Right cardiac atrium (tissue), 5 donors: ENCODE measurements at regions of chr11 and their contacts with region 1.

Region 1: GRCh38 chr11:34492806-34493414 is 20.7 kb downstream of the ELF5 start:
- DNase-seq: peak in 2 of 3 donors; percentile 57 to 86
- ATAC-seq: no peak
- H3K4me3 ChIP-seq: no peak overlapping the region
- H3K27ac ChIP-seq: no peak overlapping the region
- H3K4me1 ChIP-seq: no peaks in the 10 kb centered on the region
- H3K27me3 ChIP-seq: no peaks in the 10 kb centered on the region

Region 2: GRCh38 chr11:34174412-34175041 is 318.4 kb before region 1 on chr11:
- intact Hi-C with region 1: loop called in 3 of 4 experiments (anchors 5 to 10 kb)
- DNase-seq: peak; percentile 87 to 96 (median 95)
- ATAC-seq: peak; percentile 97 to 98
- H3K4me3 ChIP-seq: no peak overlapping the region
- H3K27ac ChIP-seq: no peak overlapping the region
- H3K4me1 ChIP-seq: peaks cover 6% of the 10 kb centered on the region
- H3K27me3 ChIP-seq: no peaks in the 10 kb centered on the region